Activated T-helper 1 cell treated with anti-CD3 and anti-CD28 coated beads, Interleukin-12 subunit alpha, Interleukin-12 subunit beta, Interleukin-2, Interleukin-4 antibody, amounts not matched to agents 30 ng/mL and 10 ng/mL and 1 ng/mL, durations not matched to agents 14 hours and 24 hours and 36 hours (primary cell): ENCODE measurements at regions of chr20 and their contacts with region 1.

Region 1: GRCh38 chr20:35699127-35699975 is at the starts of genes NFS1 and ROMO1:
- DNase-seq: peak; percentile 80
- H3K4me3 Mint-ChIP-seq: peak within 1 kb of the TSS; percentile 92
- H3K27ac Mint-ChIP-seq: peak within 1 kb of the TSS; percentile 94
- H3K4me1 Mint-ChIP-seq: peaks cover 38% of the 10 kb centered on the region
- H3K27me3 Mint-ChIP-seq: no peaks in the 10 kb centered on the region
- total RNA-seq, gene NFS1: 35.7 and 36.2 TPM in 2 replicates
- total RNA-seq, gene ROMO1: 80.3 and 95.6 TPM in 2 replicates

Region 2: DNA sequence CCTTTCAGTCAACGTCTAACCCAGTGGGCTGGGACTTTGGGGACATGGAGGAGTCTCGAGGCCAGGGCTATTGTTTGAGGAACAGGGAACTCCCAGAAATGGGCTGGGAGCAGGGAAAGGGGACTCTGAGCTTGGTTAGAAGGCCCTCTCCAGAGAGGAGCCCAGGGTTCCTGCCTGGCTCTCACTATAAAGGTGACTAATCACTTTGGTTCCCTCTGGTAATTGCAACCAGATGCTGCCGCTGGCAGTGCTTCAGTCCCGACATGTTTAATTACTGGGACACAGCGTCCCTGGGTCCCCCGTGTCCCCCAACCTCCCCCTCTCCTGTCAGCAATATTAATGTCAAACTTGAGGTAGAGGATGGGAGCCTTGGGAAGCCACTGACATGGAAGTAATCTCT is 256.3 kb before region 1 on chr20:
- intact Hi-C with region 1: no loop called
- DNase-seq: no peak
- H3K4me3 Mint-ChIP-seq: no peak overlapping the region
- H3K27ac Mint-ChIP-seq: no peak overlapping the region
- H3K4me1 Mint-ChIP-seq: peaks cover 8% of the 10 kb centered on the region
- H3K27me3 Mint-ChIP-seq: peaks cover 18% of the 10 kb centered on the region

Region 3: DNA sequence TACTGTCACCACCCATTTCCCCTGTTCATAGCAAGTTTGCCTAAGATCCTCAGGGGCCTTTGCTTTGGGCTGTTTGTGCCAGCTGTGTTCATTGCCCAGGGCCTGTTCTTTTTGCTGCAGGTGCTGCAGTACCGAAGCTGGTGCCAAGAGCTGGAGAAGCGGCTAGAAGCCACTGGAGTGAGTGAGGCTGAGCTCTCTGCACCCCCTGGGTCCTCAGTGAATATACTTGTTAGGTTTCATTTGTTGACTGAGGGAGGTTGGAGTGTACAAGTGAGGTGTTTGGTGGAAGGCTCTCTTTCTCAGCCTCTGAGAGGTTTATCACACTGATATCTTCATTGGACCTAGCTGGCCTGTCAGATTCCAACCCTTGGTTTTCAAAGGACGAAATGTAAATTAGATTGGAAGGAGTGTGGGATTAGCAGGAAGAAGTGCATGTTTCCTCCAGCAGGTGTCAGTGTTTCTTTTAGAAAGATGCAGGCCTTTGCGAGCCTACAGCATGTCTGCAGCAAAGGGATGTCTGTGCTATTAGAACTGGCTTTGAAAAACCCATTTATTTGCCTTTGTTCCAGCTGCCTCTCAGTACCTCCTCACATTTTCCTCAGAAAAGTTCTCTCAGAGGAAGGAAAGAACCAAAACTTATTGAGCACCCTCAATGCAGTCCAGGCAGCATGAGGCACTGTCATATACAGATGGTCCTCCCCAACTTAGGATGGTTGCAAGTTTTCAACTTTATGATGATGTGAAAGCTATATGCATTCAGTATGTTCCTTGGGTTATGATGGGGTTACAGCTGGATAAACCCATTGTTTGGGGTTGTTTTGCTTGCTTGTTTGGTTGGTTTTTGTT is 235.7 kb before region 1 on chr20:
- intact Hi-C with region 1: loop called (anchors 2 kb)
- DNase-seq: peak; percentile 48
- H3K4me3 Mint-ChIP-seq: no peak overlapping the region
- H3K27ac Mint-ChIP-seq: no peak overlapping the region
- H3K4me1 Mint-ChIP-seq: no peaks in the 10 kb centered on the region
- H3K27me3 Mint-ChIP-seq: no peaks in the 10 kb centered on the region

Region 4: GRCh38 chr20:35664544-35665221 is 34.7 kb before region 1 on chr20 and contains the starts of genes CPNE1 and RBM12:
- intact Hi-C with region 1: loop called (anchors 1 kb)
- DNase-seq: peak; percentile 91
- H3K4me3 Mint-ChIP-seq: peak within 1 kb of the TSS; percentile 95
- H3K27ac Mint-ChIP-seq: peak within 1 kb of the TSS; percentile 99
- H3K4me1 Mint-ChIP-seq: peaks cover 48% of the 10 kb centered on the region
- H3K27me3 Mint-ChIP-seq: no peaks in the 10 kb centered on the region
- total RNA-seq, gene CPNE1: 304 and 308 TPM in 2 replicates
- total RNA-seq, gene RBM12: 151 and 168 TPM in 2 replicates

Region 5: GRCh38 chr20:35741892-35742740 is 42.8 kb after region 1 on chr20 and contains the start of gene RBM39:
- intact Hi-C with region 1: loop called (anchors 2 kb)
- DNase-seq: peak; percentile 100
- H3K4me3 Mint-ChIP-seq: peak within 1 kb of the TSS; percentile 98
- H3K27ac Mint-ChIP-seq: peak within 1 kb of the TSS; percentile 99
- H3K4me1 Mint-ChIP-seq: peaks cover 40% of the 10 kb centered on the region
- H3K27me3 Mint-ChIP-seq: no peaks in the 10 kb centered on the region
- total RNA-seq, gene RBM39: 349 and 357 TPM in 2 replicates

Region 6: DNA sequence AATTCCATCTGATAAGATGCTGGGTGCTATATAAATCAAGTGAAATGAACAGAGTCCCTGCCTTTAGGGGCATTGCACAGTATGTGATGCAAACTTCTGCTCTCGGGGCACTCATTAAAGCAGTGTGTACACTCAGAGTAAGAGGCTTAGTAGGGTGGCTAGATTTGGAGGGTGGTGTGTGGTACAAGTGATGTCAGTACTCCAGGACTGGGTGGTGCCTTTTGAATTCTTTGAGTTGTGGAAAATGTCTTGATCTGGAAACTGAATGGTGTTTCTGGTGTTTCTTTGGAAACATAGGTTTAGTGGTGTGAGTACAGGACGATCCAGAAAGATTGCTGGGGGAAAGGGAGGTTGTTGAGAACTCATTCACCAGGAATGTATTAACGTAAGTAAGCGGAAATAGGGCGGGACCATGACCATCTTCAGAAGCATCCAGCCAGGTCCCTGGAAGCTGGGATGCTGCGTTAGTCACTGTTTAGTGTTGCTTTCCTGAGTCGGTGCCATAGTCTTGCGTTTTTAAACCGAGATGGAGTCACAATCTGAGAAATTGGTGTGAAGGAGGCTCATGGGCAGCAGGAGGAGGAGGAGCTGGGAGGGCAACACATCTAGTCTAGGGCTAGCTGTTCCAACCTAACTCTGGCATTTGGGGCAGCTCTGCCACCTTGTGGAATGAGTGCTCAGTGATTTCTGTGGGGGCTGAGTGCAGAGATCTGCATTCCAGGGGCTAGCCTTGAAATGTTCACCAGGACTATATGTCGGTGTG is 184.6 kb after region 1 on chr20:
- intact Hi-C with region 1: loop called (anchors 5 kb)
- DNase-seq: peak; percentile 31
- H3K4me3 Mint-ChIP-seq: no peak overlapping the region
- H3K27ac Mint-ChIP-seq: no peak overlapping the region
- H3K4me1 Mint-ChIP-seq: peaks cover 7% of the 10 kb centered on the region
- H3K27me3 Mint-ChIP-seq: no peaks in the 10 kb centered on the region

Region 7: GRCh38 chr20:36017034-36017951 is 317.9 kb after region 1 on chr20:
- intact Hi-C with region 1: no loop called
- DNase-seq: no peak
- H3K4me3 Mint-ChIP-seq: no peak overlapping the region
- H3K27ac Mint-ChIP-seq: no peak overlapping the region
- H3K4me1 Mint-ChIP-seq: no peaks in the 10 kb centered on the region
- H3K27me3 Mint-ChIP-seq: peaks cover 18% of the 10 kb centered on the region